Endothelial cell of umbilical vein (primary cell): ENCODE measurements at regions of chr19 and their contacts with region 1.

Region 1: GRCh38 chr19:56314562-56315077 is at the start of gene ZSCAN5A:
- DNase-seq: peak; percentile 98
- H3K4me3 ChIP-seq: peak within 1 kb of the TSS; percentile 66 to 89 (median 76)
- H3K27ac ChIP-seq: peak within 1 kb of the TSS; percentile 98
- H3K4me1 ChIP-seq: peaks cover 12% of the 10 kb centered on the region
- H3K27me3 ChIP-seq: no peaks in the 10 kb centered on the region
- CTCF ChIP-seq: no peak
- POLR2A ChIP-seq: peak; percentile 54
- total RNA-seq, gene ZSCAN5A: 12.0 and 12.2 TPM in 2 replicates

Region 2: DNA sequence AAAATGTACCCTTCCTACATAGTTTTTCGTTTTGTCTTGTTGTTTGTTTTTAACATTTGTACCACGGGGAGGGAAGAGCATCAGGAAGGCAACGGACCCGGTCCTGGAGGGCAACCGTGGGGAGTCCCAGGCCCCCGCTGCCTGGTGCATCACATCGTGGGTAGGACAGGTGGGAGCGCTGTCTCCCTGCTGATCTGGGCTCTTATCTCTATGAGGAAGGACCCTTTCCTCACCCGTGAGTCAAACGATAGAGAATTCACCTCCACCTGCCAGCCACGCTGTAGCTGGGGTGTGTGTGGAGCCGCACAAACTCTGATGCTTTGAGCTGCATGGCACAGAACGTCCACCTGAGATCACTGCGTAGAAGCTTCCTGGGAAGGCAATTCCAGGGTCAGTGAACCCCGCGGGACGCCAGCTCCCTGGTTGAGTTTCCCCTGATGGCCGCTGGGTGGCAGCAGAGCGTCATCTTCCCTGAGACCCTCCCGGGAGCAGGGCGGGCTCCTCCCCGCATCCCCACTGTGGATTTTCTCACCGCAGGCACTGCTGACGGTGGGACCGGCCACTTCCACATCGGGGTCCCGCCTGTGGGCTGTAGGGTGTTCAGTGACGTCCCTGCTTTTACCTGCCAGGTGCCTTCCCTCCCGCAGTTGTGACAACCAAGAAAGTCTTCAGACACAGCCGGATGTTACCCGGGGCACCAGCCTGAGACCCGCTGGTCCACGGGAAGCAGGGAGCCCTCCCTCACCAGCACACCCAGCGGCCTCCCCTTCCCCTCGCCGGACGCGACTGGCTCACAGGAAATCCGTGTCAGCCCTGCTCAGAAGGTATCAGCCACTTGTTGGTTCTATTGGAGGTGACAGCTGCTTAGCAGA is 248.2 kb before region 1 on chr19:
- CTCF ChIA-PET with region 1: interaction called, 19 read pairs
- POLR2A ChIA-PET with region 1: no interaction called
- dilution Hi-C with region 1: no loop called
- intact Hi-C with region 1: loop called (anchors 1 kb)
- DNase-seq: peak; percentile 54
- H3K4me3 ChIP-seq: peak overlapping the region in 2 of 3 experiments; percentile 20 to 32
- H3K27ac ChIP-seq: no peak overlapping the region
- H3K4me1 ChIP-seq: peaks cover 7% of the 10 kb centered on the region
- H3K27me3 ChIP-seq: no peaks in the 10 kb centered on the region
- CTCF ChIP-seq: peak; percentile 91 to 95
- POLR2A ChIP-seq: no peak

Region 3: GRCh38 chr19:56140583-56141416 is 173.8 kb before region 1 on chr19 and contains the start of gene ZNF444:
- CTCF ChIA-PET with region 1: interaction called, 9 read pairs
- POLR2A ChIA-PET with region 1: no interaction called
- dilution Hi-C with region 1: no loop called
- intact Hi-C with region 1: loop called (anchors 1 kb)
- DNase-seq: peak; percentile 100
- H3K4me3 ChIP-seq: peak within 1 kb of the TSS; percentile 57 to 73 (median 70)
- H3K27ac ChIP-seq: peak within 1 kb of the TSS; percentile 61
- H3K4me1 ChIP-seq: peaks cover 10% of the 10 kb centered on the region
- H3K27me3 ChIP-seq: no peaks in the 10 kb centered on the region
- CTCF ChIP-seq: no peak
- POLR2A ChIP-seq: peak; percentile 59
- total RNA-seq, gene ZNF444: 37.1 and 37.2 TPM in 2 replicates

Region 4: GRCh38 chr19:56162258-56162657 is 152.4 kb before region 1 on chr19:
- CTCF ChIA-PET with region 1: no interaction called
- POLR2A ChIA-PET with region 1: no interaction called
- dilution Hi-C with region 1: no loop called
- intact Hi-C with region 1: no loop called
- DNase-seq: peak; percentile 62
- H3K4me3 ChIP-seq: no peak overlapping the region
- H3K27ac ChIP-seq: peak overlapping the region; percentile 20
- H3K4me1 ChIP-seq: peaks cover 7% of the 10 kb centered on the region
- H3K27me3 ChIP-seq: no peaks in the 10 kb centered on the region
- CTCF ChIP-seq: no peak
- POLR2A ChIP-seq: no peak

Region 5: GRCh38 chr19:56273563-56274117 is 41.0 kb before region 1 on chr19:
- CTCF ChIA-PET with region 1: interaction called, 23 read pairs
- POLR2A ChIA-PET with region 1: no interaction called
- dilution Hi-C with region 1: no loop called
- intact Hi-C with region 1: loop called (anchors 2 kb)
- DNase-seq: peak; percentile 80
- H3K4me3 ChIP-seq: no peak overlapping the region
- H3K27ac ChIP-seq: peak overlapping the region; percentile 64
- H3K4me1 ChIP-seq: peaks cover 27% of the 10 kb centered on the region
- H3K27me3 ChIP-seq: no peaks in the 10 kb centered on the region
- CTCF ChIP-seq: no peak
- POLR2A ChIP-seq: no peak

Region 6: GRCh38 chr19:56367829-56368711 is 53.5 kb after region 1 on chr19:
- CTCF ChIA-PET with region 1: interaction called, 9 read pairs
- POLR2A ChIA-PET with region 1: no interaction called
- dilution Hi-C with region 1: no loop called
- intact Hi-C with region 1: loop called (anchors 2 kb)
- DNase-seq: peak; percentile 98
- H3K4me3 ChIP-seq: peak overlapping the region; percentile 29 to 89 (median 88)
- H3K27ac ChIP-seq: peak overlapping the region; percentile 7
- H3K4me1 ChIP-seq: peaks cover 7% of the 10 kb centered on the region
- H3K27me3 ChIP-seq: no peaks in the 10 kb centered on the region
- CTCF ChIP-seq: no peak
- POLR2A ChIP-seq: peak; percentile 64

Region 7: GRCh38 chr19:56554272-56554869 is 239.8 kb after region 1 on chr19:
- CTCF ChIA-PET with region 1: no interaction called
- POLR2A ChIA-PET with region 1: no interaction called
- dilution Hi-C with region 1: no loop called
- intact Hi-C with region 1: no loop called
- DNase-seq: no peak
- H3K4me3 ChIP-seq: no peak overlapping the region
- H3K27ac ChIP-seq: no peak overlapping the region
- H3K4me1 ChIP-seq: no peaks in the 10 kb centered on the region
- H3K27me3 ChIP-seq: no peaks in the 10 kb centered on the region
- CTCF ChIP-seq: no peak
- POLR2A ChIP-seq: no peak